MCF 10A (cell line): ENCODE measurements at regions of chr2 and their contacts with region 1.

Region 1: GRCh38 chr2:231399853-231400680 is 4.6 kb downstream of the B3GNT7 start:
- DNase-seq: peak; percentile 53
- H3K4me3 Mint-ChIP-seq: no peak overlapping the region
- H3K27ac Mint-ChIP-seq: no peak overlapping the region
- H3K4me1 Mint-ChIP-seq: no peaks in the 10 kb centered on the region
- H3K27me3 Mint-ChIP-seq: no peaks in the 10 kb centered on the region
- CTCF ChIP-seq: no peak

Region 2: GRCh38 chr2:231297108-231297908 is 102.8 kb before region 1 on chr2:
- CTCF ChIA-PET with region 1: interaction called, 18 read pairs
- POLR2A ChIA-PET with region 1: no interaction called
- intact Hi-C with region 1: loop called (anchors 2 kb)
- DNase-seq: peak; percentile 51
- H3K4me3 Mint-ChIP-seq: no peak overlapping the region
- H3K27ac Mint-ChIP-seq: no peak overlapping the region
- H3K4me1 Mint-ChIP-seq: no peaks in the 10 kb centered on the region
- H3K27me3 Mint-ChIP-seq: no peaks in the 10 kb centered on the region
- CTCF ChIP-seq: peak; percentile 42

Region 3: DNA sequence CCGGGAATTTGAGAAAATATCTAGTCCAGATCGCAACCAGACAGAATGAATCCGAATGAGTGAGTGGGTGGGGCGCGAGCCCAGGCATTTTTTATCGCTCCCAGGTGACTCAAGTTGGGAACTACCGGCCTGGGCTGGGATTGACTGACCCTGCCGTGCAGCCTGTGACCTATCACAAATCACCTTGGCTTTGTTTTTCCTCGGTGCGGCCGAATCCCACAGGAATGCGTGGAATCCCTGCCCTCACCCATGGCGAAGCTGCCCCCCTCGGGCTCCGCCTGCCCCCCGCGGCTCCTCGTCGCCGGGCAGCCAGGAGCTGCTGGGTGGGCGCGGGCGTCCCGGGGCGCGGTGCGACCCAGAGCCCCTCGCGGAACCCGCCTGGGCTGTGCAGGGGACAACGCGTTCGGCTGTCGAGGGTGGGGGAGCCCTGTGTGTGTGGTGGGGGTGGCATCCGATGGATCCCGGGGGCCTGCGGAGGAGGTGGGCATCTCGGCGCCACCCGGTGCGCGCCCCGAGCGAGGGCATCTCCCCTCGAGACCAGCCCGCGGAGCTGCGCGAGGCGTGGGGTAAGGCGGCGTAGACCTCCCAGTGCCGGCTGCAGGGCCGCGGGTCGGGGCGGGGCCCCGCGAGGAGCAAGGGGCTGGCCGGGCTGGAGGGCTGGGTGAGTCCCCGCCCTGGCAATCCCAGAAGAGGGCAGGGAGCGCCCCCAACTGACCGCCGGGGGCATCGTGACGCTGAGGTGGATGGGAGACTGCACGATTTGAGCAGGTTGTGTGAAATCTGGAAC is 12.0 kb after region 1 on chr2:
- CTCF ChIA-PET with region 1: interaction called, 16 read pairs
- POLR2A ChIA-PET with region 1: interaction called, 3 read pairs
- intact Hi-C with region 1: no loop called
- DNase-seq: peak; percentile 83
- H3K4me3 Mint-ChIP-seq: peak overlapping the region; percentile 70
- H3K27ac Mint-ChIP-seq: no peak overlapping the region
- H3K4me1 Mint-ChIP-seq: no peaks in the 10 kb centered on the region
- H3K27me3 Mint-ChIP-seq: no peaks in the 10 kb centered on the region
- CTCF ChIP-seq: peak; percentile 89